ENCODE measurements at regions of chr11 and their contacts with region 1.

Region 1: GRCh38 chr11:133821776-133822175 is 23.5 kb downstream of the SPATA19 start:
- DNase-seq: no peak
- ATAC-seq: peak; percentile 68

Region 2: GRCh38 chr11:133163463-133164419 is 658.0 kb before region 1 on chr11:
- intact Hi-C with region 1: loop called (anchors 10 kb)
- DNase-seq: no peak
- ATAC-seq: peak; percentile 70

Region 3: GRCh38 chr11:133619973-133620372 is 201.8 kb before region 1 on chr11:
- intact Hi-C with region 1: loop called (anchors 10 kb)
- DNase-seq: no peak
- ATAC-seq: peak; percentile 57

Region 4: GRCh38 chr11:133787379-133788141 is 34.2 kb before region 1 on chr11:
- intact Hi-C with region 1: no loop called
- DNase-seq: peak; percentile 74
- ATAC-seq: peak; percentile 95

Region 5: GRCh38 chr11:133834682-133835592 is 13.2 kb after region 1 on chr11:
- intact Hi-C with region 1: no loop called
- DNase-seq: no peak
- ATAC-seq: peak; percentile 72

Measured in Right ventricle myocardium inferior (tissue), 1 donor.